ENCODE measurements at regions of chr17 and their contacts with region 1.

Region 1: DNA sequence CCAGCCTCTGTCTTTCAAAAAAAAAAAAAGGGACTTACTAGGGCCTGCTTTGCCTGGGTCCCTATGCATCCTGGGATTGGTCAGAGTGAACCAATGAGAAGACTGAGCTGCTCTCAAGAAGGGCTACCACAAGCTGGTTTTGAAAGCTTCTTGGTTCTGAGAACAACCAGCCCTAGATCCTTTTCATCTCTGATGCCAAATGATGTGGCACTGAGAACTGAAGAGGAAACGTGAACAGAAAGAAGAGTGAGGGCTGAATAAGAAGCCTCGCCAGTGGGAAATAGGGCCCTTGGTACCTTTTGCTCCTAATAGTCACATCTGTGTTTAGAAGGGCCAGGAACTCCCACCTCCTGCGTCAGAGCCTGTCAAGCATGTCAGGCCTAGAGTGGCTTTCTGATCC is 10.7 kb downstream of the TACO1 start:
- DNase-seq: no peak
- H3K4me3 ChIP-seq: no peak overlapping the region
- H3K27ac ChIP-seq: peak overlapping the region; percentile 6 to 11; a peak in 2 of 4 replicates
- H3K4me1 ChIP-seq: no peaks in the 10 kb centered on the region
- H3K27me3 ChIP-seq: no peaks in the 10 kb centered on the region
- CTCF ChIP-seq: no peak
- EP300 ChIP-seq: no peak
- RAD21 ChIP-seq: no peak

Region 2: DNA sequence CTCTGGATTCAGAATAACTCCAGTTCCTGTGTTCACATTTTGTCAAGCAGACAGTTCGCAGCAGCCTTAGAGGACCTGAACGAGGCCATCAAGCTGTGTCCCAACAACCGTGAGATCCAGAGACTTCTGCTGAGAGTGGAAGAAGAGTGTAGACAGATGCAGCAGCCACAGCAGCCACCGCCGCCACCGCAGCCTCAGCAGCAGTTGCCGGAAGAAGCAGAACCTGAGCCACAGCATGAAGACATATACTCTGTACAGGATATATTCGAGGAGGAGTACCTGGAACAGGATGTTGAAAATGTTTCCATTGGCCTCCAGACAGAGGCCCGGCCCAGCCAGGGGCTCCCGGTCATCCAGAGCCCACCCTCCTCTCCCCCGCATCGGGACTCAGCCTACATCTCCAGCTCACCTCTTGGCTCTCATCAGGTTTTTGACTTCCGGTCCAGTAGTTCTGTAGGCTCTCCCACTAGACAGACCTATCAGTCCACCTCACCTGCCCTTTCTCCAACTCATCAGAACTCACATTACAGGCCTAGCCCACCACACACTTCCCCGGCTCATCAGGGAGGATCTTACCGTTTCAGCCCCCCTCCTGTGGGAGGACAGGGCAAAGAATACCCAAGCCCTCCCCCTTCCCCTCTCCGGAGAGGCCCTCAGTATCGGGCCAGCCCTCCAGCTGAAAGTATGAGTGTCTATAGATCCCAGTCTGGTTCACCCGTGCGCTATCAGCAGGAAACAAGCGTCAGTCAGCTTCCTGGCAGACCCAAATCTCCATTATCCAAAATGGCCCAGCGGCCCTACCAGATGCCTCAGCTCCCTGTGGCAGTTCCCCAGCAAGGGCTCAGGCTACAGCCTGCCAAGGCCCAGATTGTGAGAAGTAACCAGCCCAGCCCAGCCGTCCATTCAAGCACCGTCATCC is 191.1 kb before region 1 on chr17:
- CTCF ChIA-PET with region 1: interaction called, 827 read pairs
- POLR2A ChIA-PET with region 1: interaction called, 20 read pairs
- DNase-seq: no peak
- H3K4me3 ChIP-seq: no peak overlapping the region
- H3K27ac ChIP-seq: no peak overlapping the region
- H3K4me1 ChIP-seq: peaks cover 0 to 8% of the 10 kb centered on the region in 2 experiments; a peak in 2 of 4 replicates
- H3K27me3 ChIP-seq: no peaks in the 10 kb centered on the region
- CTCF ChIP-seq: no peak
- EP300 ChIP-seq: no peak
- RAD21 ChIP-seq: no peak

Region 3: DNA sequence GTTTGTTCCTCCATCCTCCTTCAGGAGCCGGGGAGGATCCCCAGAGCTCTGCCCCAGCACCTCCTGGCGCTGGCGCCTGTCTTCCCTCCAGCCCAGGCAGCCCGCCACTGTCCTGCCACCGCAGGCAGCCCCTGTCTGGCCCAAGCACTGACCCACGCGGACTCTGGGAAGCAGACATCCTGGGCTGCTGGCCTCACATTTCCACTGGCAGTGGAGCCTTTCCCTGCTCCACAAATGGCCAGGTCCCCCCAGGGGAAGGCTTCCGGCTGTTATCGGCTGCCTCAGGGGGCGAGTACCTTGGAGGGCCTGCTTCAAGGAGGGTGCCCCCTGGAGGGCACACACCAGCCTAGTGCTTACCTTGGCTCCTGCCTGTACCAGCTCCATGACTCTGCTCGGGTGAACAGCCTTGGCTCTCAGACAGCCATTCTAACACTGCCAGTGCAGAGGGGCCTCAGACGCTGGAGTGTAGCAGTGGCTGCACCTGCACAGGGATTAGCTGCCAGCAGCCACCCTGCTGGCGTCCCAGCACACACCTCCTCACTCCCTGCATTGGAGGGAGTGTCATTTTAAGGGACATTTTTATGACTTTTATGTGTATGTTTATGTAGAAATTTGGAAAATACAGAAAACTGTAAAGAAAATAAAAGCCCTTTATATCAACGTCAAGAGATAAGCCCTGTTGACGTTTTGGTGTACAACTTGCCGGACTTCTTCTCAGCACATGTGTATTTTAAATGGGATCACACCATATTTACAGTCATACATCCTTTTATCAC is 113.5 kb before region 1 on chr17:
- CTCF ChIA-PET with region 1: interaction called, 13 read pairs
- POLR2A ChIA-PET with region 1: no interaction called
- DNase-seq: peak; percentile 78
- H3K4me3 ChIP-seq: no peak overlapping the region
- H3K27ac ChIP-seq: peak overlapping the region in 1 of 2 experiments; percentile 43; a peak in 2 of 4 replicates
- H3K4me1 ChIP-seq: peaks cover 4 to 27% of the 10 kb centered on the region in 2 experiments; a peak in 1 of 4 replicates
- H3K27me3 ChIP-seq: peaks cover under 1% of the 10 kb centered on the region; the same call in 1 of the 2 replicates
- CTCF ChIP-seq: peak; percentile 37
- EP300 ChIP-seq: no peak
- RAD21 ChIP-seq: peak; percentile 35

Region 4: GRCh38 chr17:63511331-63511730 is 100.0 kb before region 1 on chr17:
- CTCF ChIA-PET with region 1: no interaction called
- POLR2A ChIA-PET with region 1: no interaction called
- DNase-seq: no peak
- H3K4me3 ChIP-seq: no peak overlapping the region
- H3K27ac ChIP-seq: no peak overlapping the region
- H3K4me1 ChIP-seq: no peaks in the 10 kb centered on the region
- H3K27me3 ChIP-seq: peaks cover 27% of the 10 kb centered on the region
- CTCF ChIP-seq: no peak
- EP300 ChIP-seq: no peak
- RAD21 ChIP-seq: no peak

Region 5: DNA sequence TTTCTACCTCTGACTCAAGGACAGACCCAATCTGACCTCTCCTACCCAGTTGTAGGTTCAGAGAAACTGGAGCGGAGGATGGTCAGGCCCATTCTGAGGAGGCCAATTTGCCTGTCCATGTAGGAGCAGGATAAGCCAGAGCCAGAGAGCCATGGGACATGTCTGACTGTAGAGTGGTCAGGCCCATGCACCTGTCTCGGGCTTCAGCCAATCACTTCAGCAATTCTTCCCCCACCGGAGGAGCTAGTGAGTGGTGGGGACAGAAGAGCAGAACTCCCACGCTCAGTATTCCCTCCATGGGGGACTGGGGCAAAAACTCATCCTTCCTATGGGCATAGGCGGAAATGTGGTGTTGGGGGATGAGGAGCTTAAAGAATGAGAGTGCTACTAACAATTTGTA is 46.8 kb before region 1 on chr17:
- CTCF ChIA-PET with region 1: interaction called, 16 read pairs
- POLR2A ChIA-PET with region 1: no interaction called
- DNase-seq: no peak
- H3K4me3 ChIP-seq: no peak overlapping the region
- H3K27ac ChIP-seq: no peak overlapping the region
- H3K4me1 ChIP-seq: peaks cover 0 to 3% of the 10 kb centered on the region in 2 experiments; a peak in 1 of 4 replicates
- H3K27me3 ChIP-seq: no peaks in the 10 kb centered on the region
- CTCF ChIP-seq: no peak
- EP300 ChIP-seq: no peak
- RAD21 ChIP-seq: no peak

Region 6: DNA sequence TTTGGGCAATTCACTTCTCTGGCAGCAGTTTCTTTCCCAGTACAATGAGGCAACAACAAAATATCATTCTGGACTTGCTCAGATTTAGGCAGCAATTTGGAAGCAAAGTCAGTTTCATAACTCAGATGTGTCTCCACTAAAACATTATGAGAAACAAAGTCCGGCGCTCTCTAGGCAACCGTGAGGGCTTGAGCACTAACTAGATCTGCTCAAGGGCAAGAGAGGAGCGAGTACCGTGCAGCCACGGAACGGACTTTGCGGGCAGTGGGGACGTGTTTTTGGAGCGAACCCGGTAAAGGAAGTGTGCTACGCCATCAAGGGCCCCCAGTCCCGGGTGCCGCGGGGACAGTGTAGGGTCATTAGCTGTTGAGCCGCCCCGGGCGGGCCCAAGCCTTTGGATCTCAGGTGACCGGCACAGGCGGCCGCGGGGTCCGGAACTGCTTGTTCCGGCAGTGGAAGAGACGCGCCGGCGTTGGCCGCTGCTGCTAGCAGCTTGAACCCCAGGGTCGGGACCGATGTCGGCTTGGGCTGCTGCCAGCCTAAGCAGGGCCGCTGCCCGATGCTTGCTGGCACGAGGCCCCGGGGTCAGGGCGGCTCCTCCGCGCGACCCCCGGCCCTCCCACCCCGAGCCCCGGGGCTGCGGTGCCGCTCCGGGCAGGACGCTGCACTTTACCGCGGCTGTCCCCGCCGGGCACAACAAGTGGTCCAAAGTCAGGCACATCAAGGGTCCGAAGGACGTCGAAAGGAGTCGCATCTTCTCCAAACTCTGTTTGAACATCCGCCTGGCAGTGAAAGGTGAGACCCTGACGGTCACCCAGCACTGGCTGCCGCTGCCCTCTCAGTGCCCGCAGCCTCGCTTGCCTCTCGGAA is 10.6 kb before region 1 on chr17 and contains the start of gene TACO1:
- CTCF ChIA-PET with region 1: interaction called, 70 read pairs
- POLR2A ChIA-PET with region 1: interaction called, 4 read pairs
- DNase-seq: peak; percentile 96
- H3K4me3 ChIP-seq: peak within 1 kb of the TSS; percentile 73 to 80
- H3K27ac ChIP-seq: peak within 1 kb of the TSS; percentile 51 to 73
- H3K4me1 ChIP-seq: peaks cover 6 to 14% of the 10 kb centered on the region in 2 experiments; a peak in 2 of 4 replicates
- H3K27me3 ChIP-seq: no peaks in the 10 kb centered on the region
- CTCF ChIP-seq: no peak
- EP300 ChIP-seq: peak in 1 of 2 experiments; percentile 51; a peak in 1 of 4 replicates
- RAD21 ChIP-seq: peak; percentile 21; the same call in 1 of the 2 replicates
- polyA plus RNA-seq, gene TACO1: 32.7 and 37.9 TPM in 2 replicates

Region 7: GRCh38 chr17:63697341-63698286 is 86.3 kb after region 1 on chr17:
- CTCF ChIA-PET with region 1: interaction called, 28 read pairs
- POLR2A ChIA-PET with region 1: interaction called, 3 read pairs
- DNase-seq: peak; percentile 71
- H3K4me3 ChIP-seq: no peak overlapping the region; a peak in 1 of 4 replicates
- H3K27ac ChIP-seq: peak overlapping the region; percentile 25 to 98; a peak in 3 of 4 replicates
- H3K4me1 ChIP-seq: peaks cover 9 to 72% of the 10 kb centered on the region in 2 experiments; a peak in 3 of 4 replicates
- H3K27me3 ChIP-seq: no peaks in the 10 kb centered on the region
- CTCF ChIP-seq: peak; percentile 66
- EP300 ChIP-seq: no peak
- RAD21 ChIP-seq: peak; percentile 26; the same call in 1 of the 2 replicates

Region 8: DNA sequence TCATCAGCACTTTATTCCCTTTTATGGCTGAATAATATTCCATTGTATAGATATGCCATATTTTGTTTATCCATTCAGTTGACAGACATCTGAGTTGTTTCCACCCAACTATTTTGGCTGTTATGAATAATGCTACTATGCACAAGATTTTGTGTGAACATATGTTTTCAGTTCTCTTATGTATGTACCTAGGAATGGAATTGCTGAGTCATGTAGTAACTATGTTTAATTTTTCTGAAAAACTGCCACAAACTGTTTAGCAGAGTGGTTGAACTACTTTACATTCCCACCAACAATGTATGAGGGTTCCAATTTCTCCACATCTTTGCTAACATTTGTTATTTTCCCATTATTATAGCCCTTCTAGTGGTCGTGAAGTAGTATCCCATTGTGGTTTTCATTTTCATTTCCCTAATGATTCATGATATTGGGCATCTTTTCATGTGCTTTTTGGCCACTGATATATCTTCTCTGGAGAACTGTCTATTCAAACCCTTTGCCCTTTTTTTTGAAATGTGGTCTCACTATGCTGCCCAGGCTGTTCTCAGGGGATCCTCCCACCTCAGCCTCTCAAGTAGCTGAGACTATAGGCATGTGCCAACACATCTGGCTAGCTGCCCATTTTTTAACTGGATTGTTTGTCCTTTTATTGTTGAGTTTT is 1024.4 kb after region 1 on chr17:
- CTCF ChIA-PET with region 1: no interaction called
- POLR2A ChIA-PET with region 1: no interaction called
- DNase-seq: no peak
- H3K4me3 ChIP-seq: no peak overlapping the region
- H3K27ac ChIP-seq: peak overlapping the region in 1 of 2 experiments; percentile 95; a peak in 2 of 4 replicates
- H3K4me1 ChIP-seq: peaks cover 0 to 4% of the 10 kb centered on the region in 2 experiments; a peak in 1 of 4 replicates
- H3K27me3 ChIP-seq: no peaks in the 10 kb centered on the region
- CTCF ChIP-seq: no peak; the same call in 1 of the 2 replicates
- EP300 ChIP-seq: peak; percentile 4 to 73; a peak in 2 of 4 replicates
- RAD21 ChIP-seq: no peak